MCF 10A (cell line): ENCODE measurements at regions of chr20 and their contacts with region 1.

Region 1: GRCh38 chr20:9978397-9979004 is 56.3 kb upstream of the ANKEF1 start:
- DNase-seq: peak; percentile 88
- H3K4me3 Mint-ChIP-seq: no peak overlapping the region
- H3K27ac Mint-ChIP-seq: no peak overlapping the region
- H3K4me1 Mint-ChIP-seq: peaks cover 10% of the 10 kb centered on the region
- H3K27me3 Mint-ChIP-seq: no peaks in the 10 kb centered on the region
- CTCF ChIP-seq: peak; percentile 87

Region 2: DNA sequence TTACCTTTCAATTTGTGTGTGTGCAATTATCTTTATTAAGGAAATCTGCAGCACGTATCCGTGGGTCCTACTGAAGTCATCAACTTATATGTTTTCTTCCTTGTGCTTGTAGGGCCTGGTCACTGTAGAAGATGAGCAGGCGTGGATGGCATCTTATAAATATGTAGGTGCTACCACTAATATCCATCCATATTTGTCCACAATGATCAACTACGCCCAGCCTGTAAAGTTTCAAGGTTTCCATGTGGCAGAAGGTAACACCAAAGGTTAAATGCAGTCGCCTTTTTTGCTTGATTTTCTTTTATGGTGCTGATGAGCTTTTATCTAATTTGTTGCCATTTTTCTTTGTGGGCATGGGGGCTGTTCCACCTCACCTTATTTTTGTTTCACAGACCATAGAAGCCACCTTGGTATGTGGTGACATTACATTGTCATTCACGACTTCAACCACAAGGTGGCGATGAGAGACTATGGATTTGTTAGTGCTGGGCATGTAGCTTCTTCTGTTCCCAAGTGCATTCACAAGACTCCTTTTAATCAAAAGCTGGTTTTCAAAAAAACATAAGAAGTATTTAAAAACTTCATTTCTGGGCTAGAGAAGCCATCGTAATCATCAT is 570.6 kb before region 1 on chr20:
- CTCF ChIA-PET with region 1: interaction called, 3 read pairs
- POLR2A ChIA-PET with region 1: no interaction called
- intact Hi-C with region 1: loop called (anchors 10 kb)
- DNase-seq: peak; percentile 80
- H3K4me3 Mint-ChIP-seq: no peak overlapping the region
- H3K27ac Mint-ChIP-seq: no peak overlapping the region
- H3K4me1 Mint-ChIP-seq: no peaks in the 10 kb centered on the region
- H3K27me3 Mint-ChIP-seq: no peaks in the 10 kb centered on the region
- CTCF ChIP-seq: peak; percentile 84

Region 3: DNA sequence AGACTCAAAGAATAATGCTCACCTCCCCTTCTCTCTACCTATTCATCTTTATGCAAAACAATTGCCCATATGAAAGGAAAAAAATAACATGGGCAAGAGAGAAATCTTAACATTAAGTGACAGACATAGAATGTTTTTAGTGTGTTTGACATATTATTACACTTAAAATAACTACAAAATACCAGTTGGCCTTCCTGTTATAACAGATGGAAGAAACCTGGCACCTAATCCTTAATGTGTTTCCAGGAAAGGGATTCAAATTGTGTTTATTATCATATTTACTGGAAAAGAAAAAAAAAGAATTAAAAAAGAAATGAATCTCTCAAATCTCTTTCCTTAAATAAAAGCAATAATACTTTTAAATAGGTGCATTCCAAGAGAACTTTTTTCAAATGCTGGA is 305.5 kb before region 1 on chr20:
- CTCF ChIA-PET with region 1: no interaction called
- POLR2A ChIA-PET with region 1: no interaction called
- intact Hi-C with region 1: no loop called
- DNase-seq: no peak
- H3K4me3 Mint-ChIP-seq: no peak overlapping the region
- H3K27ac Mint-ChIP-seq: no peak overlapping the region
- H3K4me1 Mint-ChIP-seq: no peaks in the 10 kb centered on the region
- H3K27me3 Mint-ChIP-seq: no peaks in the 10 kb centered on the region
- CTCF ChIP-seq: no peak

Region 4: GRCh38 chr20:9999645-10000044 is 21.1 kb after region 1 on chr20:
- CTCF ChIA-PET with region 1: interaction called, 16 read pairs
- POLR2A ChIA-PET with region 1: interaction called, 3 read pairs
- intact Hi-C with region 1: no loop called
- DNase-seq: no peak
- H3K4me3 Mint-ChIP-seq: no peak overlapping the region
- H3K27ac Mint-ChIP-seq: no peak overlapping the region
- H3K4me1 Mint-ChIP-seq: no peaks in the 10 kb centered on the region
- H3K27me3 Mint-ChIP-seq: no peaks in the 10 kb centered on the region
- CTCF ChIP-seq: no peak

Region 5: GRCh38 chr20:10079964-10080363 is 101.5 kb after region 1 on chr20:
- CTCF ChIA-PET with region 1: interaction called, 826 read pairs
- POLR2A ChIA-PET with region 1: interaction called, 13 read pairs
- intact Hi-C with region 1: no loop called
- DNase-seq: peak; percentile 91
- H3K4me3 Mint-ChIP-seq: no peak overlapping the region
- H3K27ac Mint-ChIP-seq: no peak overlapping the region
- H3K4me1 Mint-ChIP-seq: peaks cover 41% of the 10 kb centered on the region
- H3K27me3 Mint-ChIP-seq: no peaks in the 10 kb centered on the region
- CTCF ChIP-seq: no peak

Region 6: GRCh38 chr20:10385850-10386544 is 407.5 kb after region 1 on chr20:
- CTCF ChIA-PET with region 1: interaction called, 11 read pairs
- POLR2A ChIA-PET with region 1: interaction called, 5 read pairs
- intact Hi-C with region 1: no loop called
- DNase-seq: peak; percentile 25
- H3K4me3 Mint-ChIP-seq: no peak overlapping the region
- H3K27ac Mint-ChIP-seq: no peak overlapping the region
- H3K4me1 Mint-ChIP-seq: peaks cover 6% of the 10 kb centered on the region
- H3K27me3 Mint-ChIP-seq: no peaks in the 10 kb centered on the region
- CTCF ChIP-seq: no peak

Region 7: DNA sequence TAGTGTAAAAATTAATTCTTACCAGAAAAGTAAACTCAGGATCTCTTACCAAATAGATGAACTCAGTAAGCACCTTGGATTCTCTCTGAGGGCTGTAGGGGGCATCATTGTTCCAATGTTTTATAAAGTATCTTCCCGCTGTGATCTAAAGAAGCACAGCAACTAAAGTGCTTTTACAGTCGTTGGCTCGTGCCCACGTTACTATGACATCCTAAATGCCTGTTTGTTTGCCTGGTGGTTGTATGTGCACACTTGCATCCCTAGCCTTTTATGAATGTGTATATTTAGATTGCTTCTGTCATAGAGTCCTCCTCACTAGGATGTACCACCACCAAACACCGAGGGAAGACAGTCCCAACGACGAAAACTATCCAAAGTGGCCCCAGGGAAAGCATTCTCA is 491.1 kb after region 1 on chr20:
- CTCF ChIA-PET with region 1: interaction called, 18 read pairs
- POLR2A ChIA-PET with region 1: no interaction called
- intact Hi-C with region 1: no loop called
- DNase-seq: peak; percentile 81
- H3K4me3 Mint-ChIP-seq: no peak overlapping the region
- H3K27ac Mint-ChIP-seq: peak overlapping the region; percentile 59
- H3K4me1 Mint-ChIP-seq: peaks cover 13% of the 10 kb centered on the region
- H3K27me3 Mint-ChIP-seq: no peaks in the 10 kb centered on the region
- CTCF ChIP-seq: peak; percentile 61